Activated T-helper 2 cell treated with anti-CD3 and anti-CD28 coated beads, Interferon-gamma antibody, Interleukin-2, Interleukin-4, amounts not matched to agents 10 μg/mL and 5 μg/mL and 100 μg/mL, durations not matched to agents 14 hours and 24 hours and 36 hours (primary cell): ENCODE measurements at regions of chr7 and their contacts with region 1.

Region 1: DNA sequence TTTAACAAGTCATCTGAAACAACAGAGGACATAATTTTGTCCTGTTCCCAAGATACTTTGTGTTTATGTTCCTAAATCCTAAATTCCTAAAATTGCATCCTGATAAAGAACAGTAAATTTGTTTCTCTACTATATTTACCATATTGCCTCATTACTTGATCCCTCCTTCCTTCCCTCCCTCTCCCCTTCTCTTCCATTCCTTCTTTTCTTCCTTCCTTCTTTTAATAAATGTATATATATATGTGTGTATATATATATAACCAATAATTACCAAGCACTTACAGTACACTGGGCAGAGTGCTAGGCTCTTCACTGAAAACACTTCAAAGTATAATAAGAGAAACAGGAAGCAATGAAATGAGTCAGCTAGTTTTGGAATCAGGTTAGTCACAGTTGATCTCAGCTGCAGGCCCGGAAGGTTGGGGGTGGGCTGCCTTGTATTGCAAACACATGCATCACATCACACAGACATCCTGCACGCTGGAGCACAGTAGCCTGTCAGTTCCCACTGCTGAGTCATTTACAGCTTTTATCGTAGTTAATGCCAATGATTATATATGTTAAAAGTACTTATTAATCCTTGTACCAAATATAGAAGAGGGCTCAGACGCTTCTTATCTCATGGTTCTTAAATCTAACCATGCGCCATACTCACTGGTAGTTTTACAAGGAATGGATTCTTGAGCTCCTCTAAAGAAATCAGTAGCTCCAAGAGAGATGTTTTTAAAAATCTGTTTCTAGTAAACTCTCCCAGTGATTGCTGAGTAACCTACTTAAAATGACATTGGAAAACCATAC is 551.7 kb downstream of the GRM8 start:
- DNase-seq: peak; percentile 72
- H3K4me3 Mint-ChIP-seq: no peak overlapping the region
- H3K27ac Mint-ChIP-seq: no peak overlapping the region
- H3K4me1 Mint-ChIP-seq: peaks cover 17% of the 10 kb centered on the region
- H3K27me3 Mint-ChIP-seq: peaks cover 21% of the 10 kb centered on the region

Region 2: DNA sequence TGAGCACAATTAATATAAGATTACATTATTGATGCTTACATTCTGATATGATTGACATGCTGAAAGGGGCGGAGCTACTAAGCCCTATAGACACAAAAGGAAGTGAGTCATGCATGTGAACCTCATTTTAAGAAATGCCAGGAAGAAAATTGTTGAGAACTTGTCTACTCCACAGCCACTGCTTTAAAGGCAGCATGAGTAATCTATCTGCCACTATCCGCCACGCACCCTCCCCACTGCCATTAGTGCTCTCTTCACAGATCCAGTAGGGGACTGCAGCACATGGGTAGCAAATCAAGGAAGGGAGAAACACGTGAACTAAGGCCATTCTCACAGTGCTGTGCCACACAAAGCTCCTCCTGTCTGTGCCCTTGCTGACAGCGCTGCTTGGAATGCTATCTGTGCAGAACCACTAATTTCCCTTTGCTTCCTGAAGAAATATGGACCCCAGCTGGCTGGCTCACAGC is 27.0 kb after region 1 on chr7:
- intact Hi-C with region 1: loop called (anchors 2 kb)
- DNase-seq: no peak
- H3K4me3 Mint-ChIP-seq: no peak overlapping the region
- H3K27ac Mint-ChIP-seq: no peak overlapping the region
- H3K4me1 Mint-ChIP-seq: peaks cover 3% of the 10 kb centered on the region
- H3K27me3 Mint-ChIP-seq: no peaks in the 10 kb centered on the region